Naive thymus-derived CD4-positive, alpha-beta T cell (primary cell): ENCODE measurements at regions of chr9 and their contacts with region 1.

Region 1: DNA sequence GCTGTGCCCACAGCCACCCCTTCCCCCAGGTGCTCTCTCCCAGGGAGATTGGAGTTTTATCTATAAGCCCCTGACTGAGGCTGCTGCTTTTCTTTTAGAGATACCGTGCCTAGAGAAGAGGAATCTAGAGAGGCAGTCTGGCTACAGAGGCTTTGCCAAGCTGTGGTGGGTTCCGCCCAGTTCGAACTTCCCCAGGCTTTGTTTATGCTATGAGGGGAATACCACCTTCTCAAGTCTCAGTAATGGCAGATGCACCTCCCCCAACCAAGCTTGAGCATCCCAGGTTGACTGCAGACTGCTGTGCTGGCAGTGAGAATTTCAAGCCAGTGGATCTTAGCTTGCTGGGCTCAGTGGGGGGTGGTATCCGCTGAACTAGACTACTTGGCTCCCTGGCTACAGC is 157.4 kb downstream of the CAAP1 start:
- DNase-seq: no peak
- ATAC-seq: no peak
- H3K4me3 ChIP-seq: no peak overlapping the region
- H3K4me3 Mint-ChIP-seq: no peak overlapping the region
- H3K27ac ChIP-seq: no peak overlapping the region
- H3K27ac Mint-ChIP-seq: no peak overlapping the region
- H3K4me1 ChIP-seq: no peaks in the 10 kb centered on the region
- H3K4me1 Mint-ChIP-seq: no peaks in the 10 kb centered on the region
- H3K27me3 ChIP-seq: no peaks in the 10 kb centered on the region
- H3K27me3 Mint-ChIP-seq: peaks cover 4 to 44% (median 30%) of the 10 kb centered on the region in 5 donors

Region 2: DNA sequence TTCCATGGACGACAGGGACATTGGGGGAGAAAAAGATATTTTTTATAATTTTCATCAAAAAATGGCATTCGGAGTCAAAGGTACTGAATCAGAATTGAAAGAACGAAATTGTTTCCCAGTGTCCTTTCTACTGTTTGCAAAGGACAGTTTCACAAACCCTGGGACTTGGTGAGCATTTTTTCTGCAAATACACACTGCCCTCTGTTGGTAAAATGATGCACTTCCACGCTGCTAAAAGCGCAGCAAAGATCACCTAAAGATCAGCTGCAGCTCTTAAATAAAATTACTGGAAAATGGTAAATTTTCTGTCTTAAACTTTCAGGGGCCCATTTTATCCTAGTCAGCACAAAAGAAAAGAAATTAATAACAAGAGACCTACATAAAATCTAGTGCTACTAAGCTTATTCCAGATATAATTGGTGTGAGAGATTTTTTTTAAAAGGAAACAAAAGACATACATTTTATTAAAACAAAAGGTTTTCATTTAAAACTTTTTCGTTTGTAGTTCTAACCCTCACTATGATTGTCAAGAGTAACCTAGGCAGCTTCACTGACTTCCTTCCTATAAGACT is 408.6 kb before region 1 on chr9:
- CTCF ChIA-PET with region 1: no interaction called
- POLR2A ChIA-PET with region 1: no interaction called
- intact Hi-C with region 1: no loop called
- DNase-seq: no peak
- ATAC-seq: no peak
- H3K4me3 ChIP-seq: no peak overlapping the region
- H3K4me3 Mint-ChIP-seq: no peak overlapping the region
- H3K27ac ChIP-seq: no peak overlapping the region
- H3K27ac Mint-ChIP-seq: no peak overlapping the region
- H3K4me1 ChIP-seq: no peaks in the 10 kb centered on the region
- H3K4me1 Mint-ChIP-seq: no peaks in the 10 kb centered on the region
- H3K27me3 ChIP-seq: no peaks in the 10 kb centered on the region
- H3K27me3 Mint-ChIP-seq: no peaks in the 10 kb centered on the region

Region 3: DNA sequence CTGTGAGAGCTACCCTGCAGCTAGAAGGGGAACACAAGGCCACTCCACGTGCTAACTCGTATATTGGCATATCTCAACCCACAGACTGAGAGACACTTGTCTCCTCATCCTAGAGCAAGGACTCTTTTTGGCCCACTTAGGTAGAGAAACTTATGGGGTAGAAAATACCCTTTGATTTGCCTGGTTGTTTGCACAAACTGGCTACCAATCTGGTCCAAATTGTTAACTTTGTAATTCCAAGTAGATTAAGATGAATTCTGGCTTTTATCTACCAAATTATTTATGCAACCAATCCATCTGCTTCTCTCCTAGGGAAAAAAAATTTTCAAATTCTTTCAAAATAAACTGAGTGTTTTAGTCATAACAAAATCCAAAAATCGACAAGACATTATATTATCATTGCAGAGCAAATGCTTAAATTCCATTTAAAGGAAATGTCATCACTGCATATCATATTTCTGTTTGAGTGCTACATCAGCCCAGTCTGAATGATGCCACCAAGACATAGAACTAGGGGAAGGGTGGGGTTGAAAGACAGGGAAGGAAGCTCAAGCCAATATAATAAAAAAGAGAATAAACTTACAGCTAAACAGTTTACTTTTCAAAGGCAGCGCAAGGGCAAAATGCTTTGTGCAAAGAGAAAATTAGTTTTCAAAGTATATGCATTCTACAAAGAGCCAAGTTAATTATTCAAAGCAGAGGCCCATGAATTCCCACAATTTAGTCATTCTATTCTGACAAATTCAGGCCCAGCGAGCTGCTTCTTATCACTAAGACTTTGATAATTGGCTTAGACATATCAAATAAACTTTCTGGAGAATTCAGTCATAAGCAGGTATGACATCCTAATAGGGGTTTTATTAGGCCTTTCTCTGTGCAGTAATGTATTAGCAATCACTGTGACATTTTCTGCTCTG is 40.5 kb before region 1 on chr9:
- CTCF ChIA-PET with region 1: no interaction called
- POLR2A ChIA-PET with region 1: no interaction called
- intact Hi-C with region 1: loop called in 1 of 2 experiments (anchors 5 kb)
- DNase-seq: no peak
- ATAC-seq: no peak
- H3K4me3 ChIP-seq: no peak overlapping the region
- H3K4me3 Mint-ChIP-seq: no peak overlapping the region
- H3K27ac ChIP-seq: no peak overlapping the region
- H3K27ac Mint-ChIP-seq: no peak overlapping the region
- H3K4me1 ChIP-seq: no peaks in the 10 kb centered on the region
- H3K4me1 Mint-ChIP-seq: no peaks in the 10 kb centered on the region
- H3K27me3 ChIP-seq: no peaks in the 10 kb centered on the region
- H3K27me3 Mint-ChIP-seq: peaks cover 0 to 12% (median 0%) of the 10 kb centered on the region in 5 donors

Region 4: GRCh38 chr9:26706223-26706622 is 28.9 kb before region 1 on chr9:
- CTCF ChIA-PET with region 1: no interaction called
- POLR2A ChIA-PET with region 1: no interaction called
- intact Hi-C with region 1: no loop called
- DNase-seq: no peak
- ATAC-seq: no peak
- H3K4me3 ChIP-seq: no peak overlapping the region
- H3K4me3 Mint-ChIP-seq: no peak overlapping the region
- H3K27ac ChIP-seq: no peak overlapping the region
- H3K27ac Mint-ChIP-seq: no peak overlapping the region
- H3K4me1 ChIP-seq: no peaks in the 10 kb centered on the region
- H3K4me1 Mint-ChIP-seq: no peaks in the 10 kb centered on the region
- H3K27me3 ChIP-seq: no peaks in the 10 kb centered on the region
- H3K27me3 Mint-ChIP-seq: peaks cover 0 to 7% (median 0%) of the 10 kb centered on the region in 5 donors

Region 5: GRCh38 chr9:26863074-26863473 is 127.9 kb after region 1 on chr9:
- CTCF ChIA-PET with region 1: no interaction called
- POLR2A ChIA-PET with region 1: no interaction called
- intact Hi-C with region 1: no loop called
- DNase-seq: no peak
- ATAC-seq: no peak
- H3K4me3 ChIP-seq: no peak overlapping the region
- H3K4me3 Mint-ChIP-seq: no peak overlapping the region
- H3K27ac ChIP-seq: no peak overlapping the region
- H3K27ac Mint-ChIP-seq: peak overlapping the region in 1 of 9 donors; percentile 64
- H3K4me1 ChIP-seq: no peaks in the 10 kb centered on the region
- H3K4me1 Mint-ChIP-seq: peaks cover 0 to 4% (median 0%) of the 10 kb centered on the region in 7 donors
- H3K27me3 ChIP-seq: no peaks in the 10 kb centered on the region
- H3K27me3 Mint-ChIP-seq: no peaks in the 10 kb centered on the region